ENCODE measurements at regions of chr12 and their contacts with region 1.

Region 1: GRCh38 chr12:24522736-24523135 is 426.2 kb downstream of the BCAT1 start:
- DNase-seq: no peak
- ATAC-seq: no peak
- H3K4me3 ChIP-seq: no peak overlapping the region
- H3K27ac ChIP-seq: no peak overlapping the region
- H3K4me1 ChIP-seq: no peaks in the 10 kb centered on the region
- H3K27me3 ChIP-seq: no peaks in the 10 kb centered on the region
- CTCF ChIP-seq: no peak

Region 2: DNA sequence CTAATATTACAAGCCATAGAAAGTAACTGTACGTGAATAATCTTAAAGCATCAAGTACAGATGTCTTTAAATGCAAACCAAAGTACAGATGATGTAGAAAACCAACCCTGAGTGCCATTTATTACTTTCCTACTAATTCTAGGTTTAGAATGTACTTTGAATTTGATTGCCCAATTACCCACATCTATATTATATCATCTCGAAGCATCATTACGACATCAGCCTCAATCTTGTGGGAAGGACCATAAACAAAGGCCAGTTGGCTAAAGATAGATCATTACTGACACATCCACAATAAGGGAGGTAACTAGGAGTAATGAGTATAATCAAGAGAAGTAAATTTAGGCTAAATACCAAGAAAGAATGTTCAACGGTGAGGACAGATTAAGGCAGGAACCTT is 52.7 kb before region 1 on chr12:
- CTCF ChIA-PET with region 1: no interaction called
- POLR2A ChIA-PET with region 1: no interaction called
- in situ Hi-C with region 1: no loop called
- intact Hi-C with region 1: loop called (anchors 2 kb)
- DNase-seq: no peak
- ATAC-seq: no peak
- H3K4me3 ChIP-seq: no peak overlapping the region
- H3K27ac ChIP-seq: no peak overlapping the region
- H3K4me1 ChIP-seq: no peaks in the 10 kb centered on the region
- H3K27me3 ChIP-seq: no peaks in the 10 kb centered on the region
- CTCF ChIP-seq: no peak

Region 3: GRCh38 chr12:24488091-24488596 is 34.6 kb before region 1 on chr12:
- CTCF ChIA-PET with region 1: no interaction called
- POLR2A ChIA-PET with region 1: no interaction called
- in situ Hi-C with region 1: no loop called
- intact Hi-C with region 1: no loop called
- DNase-seq: no peak
- ATAC-seq: no peak
- H3K4me3 ChIP-seq: no peak overlapping the region
- H3K27ac ChIP-seq: no peak overlapping the region
- H3K4me1 ChIP-seq: no peaks in the 10 kb centered on the region
- H3K27me3 ChIP-seq: no peaks in the 10 kb centered on the region
- CTCF ChIP-seq: no peak

Region 4: DNA sequence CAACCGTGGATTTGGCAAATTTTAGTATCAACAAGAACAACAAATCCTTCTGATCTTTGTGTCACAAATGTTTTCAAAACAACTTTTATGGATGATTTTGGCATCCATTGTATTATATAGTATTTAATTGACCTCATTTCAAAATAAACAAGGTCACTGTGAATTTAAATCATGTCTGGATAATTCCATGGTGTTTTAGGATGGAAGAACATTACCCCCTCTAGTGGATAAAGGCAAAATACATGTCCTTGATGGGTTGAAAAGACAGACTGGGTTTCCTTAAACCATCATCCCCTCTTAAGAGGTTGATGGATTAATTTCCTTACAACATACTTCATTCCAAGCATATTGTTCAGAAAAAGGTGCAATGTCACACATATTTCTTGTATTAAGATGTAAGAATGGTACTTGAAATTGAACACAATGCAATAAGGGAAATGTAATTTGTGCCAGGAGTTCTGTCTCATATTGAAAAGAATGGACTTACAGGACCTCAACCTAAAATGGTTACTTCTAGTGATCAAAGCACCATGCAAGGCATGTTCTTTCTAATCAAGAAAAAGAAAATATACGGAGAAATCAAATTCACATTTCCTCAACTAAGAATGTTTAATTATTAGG is 74.1 kb after region 1 on chr12:
- CTCF ChIA-PET with region 1: no interaction called
- POLR2A ChIA-PET with region 1: no interaction called
- in situ Hi-C with region 1: no loop called
- intact Hi-C with region 1: no loop called
- DNase-seq: peak; percentile 51
- ATAC-seq: peak; percentile 72; the same call in 1 of the 2 replicates
- H3K4me3 ChIP-seq: no peak overlapping the region
- H3K27ac ChIP-seq: no peak overlapping the region
- H3K4me1 ChIP-seq: no peaks in the 10 kb centered on the region
- H3K27me3 ChIP-seq: no peaks in the 10 kb centered on the region
- CTCF ChIP-seq: peak; percentile 83; the same call in 1 of the 2 replicates

Measured in Panc1 (cell line).